Activated CD4-positive, alpha-beta T cell treated with anti-CD3 and anti-CD28 coated beads, Interleukin-2, amount 10 ng/mL, durations not matched to agents 24 days and 14 days (primary cell): ENCODE measurements at regions of chr1 and their contacts with region 1.

Region 1: GRCh38 chr1:1349256-1350012 is at the start of gene DVL1:
- DNase-seq: peak; percentile 91
- H3K4me3 Mint-ChIP-seq: peak within 1 kb of the TSS; percentile 81
- H3K27ac Mint-ChIP-seq: no peak within 1 kb of the TSS
- H3K4me1 Mint-ChIP-seq: peaks cover 19% of the 10 kb centered on the region
- H3K27me3 Mint-ChIP-seq: peaks cover 20% of the 10 kb centered on the region
- total RNA-seq, gene DVL1: 63.2 and 65.9 TPM in 2 replicates

Region 2: DNA sequence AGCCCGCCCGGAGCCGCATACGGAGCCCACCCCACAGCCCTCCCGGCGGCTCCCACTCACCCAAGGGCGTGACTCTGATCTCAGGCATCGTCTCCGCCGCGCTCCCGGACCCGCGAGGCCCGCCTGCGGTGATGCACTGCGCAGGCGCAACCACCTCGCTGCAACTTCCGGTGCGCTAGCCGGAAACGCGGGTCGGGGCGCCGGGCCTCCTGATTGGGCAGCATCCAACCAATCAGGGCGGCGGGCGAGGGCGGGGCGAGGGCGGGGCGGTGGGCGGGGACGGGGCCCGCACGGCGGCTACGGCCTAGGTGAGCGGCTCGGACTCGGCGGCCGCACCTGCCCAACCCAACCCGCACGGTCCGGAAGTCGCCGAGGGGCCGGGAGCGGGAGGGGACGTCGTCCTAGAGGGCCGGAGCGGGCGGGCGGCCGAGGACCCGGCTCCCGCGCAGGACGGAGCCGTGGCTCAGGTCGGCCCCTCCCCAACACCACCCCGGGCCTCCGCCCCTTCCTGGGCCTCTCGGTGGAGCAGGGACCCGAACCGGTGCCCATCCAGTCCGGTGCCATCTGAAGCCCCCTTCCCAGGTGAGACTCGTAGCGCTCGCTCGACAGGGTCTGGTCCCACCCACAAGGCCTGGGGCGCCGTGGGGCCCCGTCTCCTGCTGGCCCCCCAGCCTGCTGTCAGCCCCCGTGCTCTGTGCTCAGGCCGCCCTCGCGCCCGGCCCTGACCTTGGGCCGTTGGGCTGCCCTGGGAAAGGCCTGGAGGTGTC is 24.7 kb before region 1 on chr1 and contains the starts of genes CPTP and INTS11:
- intact Hi-C with region 1: loop called (anchors 2 kb)
- DNase-seq: peak; percentile 99
- H3K4me3 Mint-ChIP-seq: peak within 1 kb of the TSS; percentile 92
- H3K27ac Mint-ChIP-seq: peak within 1 kb of the TSS; percentile 92
- H3K4me1 Mint-ChIP-seq: peaks cover 18% of the 10 kb centered on the region
- H3K27me3 Mint-ChIP-seq: no peaks in the 10 kb centered on the region
- total RNA-seq, gene CPTP: 11.5 and 12.3 TPM in 2 replicates
- total RNA-seq, gene INTS11: 145 TPM in 2 replicates

Region 3: GRCh38 chr1:1399187-1399871 is 49.9 kb after region 1 on chr1 and contains the start of gene CCNL2:
- intact Hi-C with region 1: loop called (anchors 2 kb)
- DNase-seq: peak; percentile 100
- H3K4me3 Mint-ChIP-seq: peak within 1 kb of the TSS; percentile 92
- H3K27ac Mint-ChIP-seq: peak within 1 kb of the TSS; percentile 90
- H3K4me1 Mint-ChIP-seq: peaks cover 42% of the 10 kb centered on the region
- H3K27me3 Mint-ChIP-seq: no peaks in the 10 kb centered on the region
- total RNA-seq, gene CCNL2: 144 and 146 TPM in 2 replicates